ENCODE measurements at regions of chr9 and their contacts with region 1.

Region 1: GRCh38 chr9:37465249-37466036 is at the start of gene ZBTB5:
- DNase-seq: peak; percentile 99
- ATAC-seq: peak; percentile 95
- total RNA-seq, gene ZBTB5: 5.1 TPM

Region 2: GRCh38 chr9:37364751-37365360 is 100.6 kb before region 1 on chr9:
- intact Hi-C with region 1: no loop called
- DNase-seq: no peak
- ATAC-seq: no peak

Region 3: GRCh38 chr9:37422289-37423104 is 42.9 kb before region 1 on chr9 and contains the start of gene GRHPR:
- intact Hi-C with region 1: loop called (anchors 5 kb)
- DNase-seq: peak; percentile 97
- ATAC-seq: peak; percentile 99
- total RNA-seq, gene GRHPR: 111 TPM

Region 4: GRCh38 chr9:37485389-37486219 is 20.2 kb after region 1 on chr9 and contains the start of gene POLR1E:
- intact Hi-C with region 1: loop called (anchors 2 kb)
- DNase-seq: peak; percentile 98
- ATAC-seq: peak; percentile 98
- total RNA-seq, gene POLR1E: 10.5 TPM

Region 5: DNA sequence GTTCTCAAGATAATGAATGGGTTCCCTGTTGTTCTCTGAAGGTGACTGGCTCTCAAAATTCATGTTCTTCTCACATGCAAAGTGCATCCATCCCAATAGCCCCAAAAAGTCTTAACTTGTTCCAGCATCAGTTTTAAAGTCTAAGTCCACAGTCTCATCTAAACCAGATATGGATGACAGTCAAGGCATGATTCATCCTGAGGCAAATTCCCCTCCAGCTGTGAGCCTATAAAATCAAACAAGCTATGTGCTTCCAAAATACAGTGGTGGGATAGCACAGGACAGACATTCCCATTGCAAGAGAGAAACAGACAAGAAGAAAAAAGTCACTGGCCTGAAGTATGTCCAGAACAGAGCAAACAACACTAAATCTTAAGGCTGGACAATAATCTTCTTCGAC is 85.3 kb after region 1 on chr9:
- intact Hi-C with region 1: no loop called
- DNase-seq: no peak
- ATAC-seq: no peak

Region 6: GRCh38 chr9:37656936-37657335 is 191.5 kb after region 1 on chr9:
- intact Hi-C with region 1: no loop called
- DNase-seq: no peak
- ATAC-seq: no peak

Measured in Right ventricle myocardium inferior (tissue), 1 donor.